Gastrocnemius medialis (tissue), 4 donors: ENCODE measurements at regions of chr15 and their contacts with region 1.

Region 1: GRCh38 chr15:47196057-47196456 is 521.2 kb upstream of the SEMA6D start:
- DNase-seq: peak; percentile 57 to 65
- ATAC-seq: peak; percentile 93 to 97
- H3K4me3 ChIP-seq: no peak overlapping the region
- H3K27ac ChIP-seq: no peak overlapping the region
- H3K4me1 ChIP-seq: no peaks in the 10 kb centered on the region
- H3K27me3 ChIP-seq: no peaks in the 10 kb centered on the region
- CTCF ChIP-seq: peak; percentile 64 to 82 (median 76)
- POLR2A ChIP-seq: no peak

Region 2: GRCh38 chr15:47293466-47294162 is 97.6 kb after region 1 on chr15:
- in situ Hi-C with region 1: loop called in 1 of 4 experiments (anchors 25 kb)
- intact Hi-C with region 1: no loop called
- DNase-seq: peak; percentile 18 to 57
- ATAC-seq: peak; percentile 69 to 74
- H3K4me3 ChIP-seq: no peak overlapping the region
- H3K27ac ChIP-seq: peak overlapping the region in 1 of 4 donors; percentile 11
- H3K4me1 ChIP-seq: peaks cover 0 to 10% of the 10 kb centered on the region in 2 donors
- H3K27me3 ChIP-seq: no peaks in the 10 kb centered on the region
- CTCF ChIP-seq: no peak
- POLR2A ChIP-seq: no peak

Region 3: GRCh38 chr15:47688573-47689086 is 492.6 kb after region 1 on chr15:
- in situ Hi-C with region 1: loop called in 1 of 4 experiments (anchors 25 kb)
- intact Hi-C with region 1: no loop called
- DNase-seq: no peak
- ATAC-seq: no peak
- H3K4me3 ChIP-seq: no peak overlapping the region
- H3K27ac ChIP-seq: no peak overlapping the region
- H3K4me1 ChIP-seq: no peaks in the 10 kb centered on the region
- H3K27me3 ChIP-seq: no peaks in the 10 kb centered on the region
- CTCF ChIP-seq: no peak
- POLR2A ChIP-seq: no peak

Region 4: GRCh38 chr15:47717036-47717611 is 521.1 kb after region 1 on chr15 and contains the start of gene SEMA6D:
- in situ Hi-C with region 1: loop called in 1 of 4 experiments (anchors 25 kb)
- intact Hi-C with region 1: loop called (anchors 5 kb)
- DNase-seq: peak; percentile 79 to 80
- ATAC-seq: peak; percentile 69 to 77
- H3K4me3 ChIP-seq: peak within 1 kb of the TSS; percentile 77 to 89 (median 85)
- H3K27ac ChIP-seq: peak within 1 kb of the TSS; percentile 88 to 96 (median 94)
- H3K4me1 ChIP-seq: peaks cover 32% of the 10 kb centered on the region in 2 donors
- H3K27me3 ChIP-seq: no peaks in the 10 kb centered on the region
- CTCF ChIP-seq: peak in 4 of 5 experiments; percentile 39 to 66 (median 52)
- POLR2A ChIP-seq: peak; percentile 12 to 29
- total RNA-seq, gene SEMA6D: 0.97 to 5.9 (median 2.7) TPM

Region 5: DNA sequence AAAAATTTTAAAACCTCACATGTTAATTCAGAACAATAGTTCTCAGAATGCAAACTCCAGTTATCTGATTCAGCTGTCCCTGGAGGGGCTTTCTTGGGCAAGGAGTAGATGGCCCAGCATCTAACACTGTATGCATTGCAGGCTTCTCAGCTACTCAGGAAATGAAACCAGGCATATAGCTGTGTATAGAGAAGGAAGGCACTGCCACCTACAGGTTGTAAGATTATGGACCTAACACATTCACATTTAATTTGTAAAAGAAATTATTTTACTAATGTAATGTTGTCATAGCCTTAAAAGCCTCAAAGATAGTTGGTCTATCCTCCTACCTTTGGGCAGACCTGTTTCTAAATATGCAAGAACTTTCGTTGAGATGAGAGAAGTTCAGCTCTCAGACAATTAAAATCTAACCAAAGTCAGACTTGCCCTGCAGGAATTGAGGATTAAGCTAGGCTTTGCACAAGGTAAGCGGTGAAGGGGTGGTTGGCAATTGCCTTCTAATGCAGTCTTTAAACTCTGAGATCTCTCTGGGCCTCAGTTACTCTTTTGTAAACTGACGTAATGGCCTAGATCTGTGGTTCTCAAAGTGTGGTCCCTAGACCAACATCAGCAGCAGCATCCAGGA is 792.0 kb after region 1 on chr15:
- in situ Hi-C with region 1: loop called (anchors 5 kb)
- intact Hi-C with region 1: loop called (anchors 1 kb)
- DNase-seq: no peak
- ATAC-seq: peak; percentile 86 to 89
- H3K4me3 ChIP-seq: no peak overlapping the region
- H3K27ac ChIP-seq: no peak overlapping the region
- H3K4me1 ChIP-seq: no peaks in the 10 kb centered on the region
- H3K27me3 ChIP-seq: no peaks in the 10 kb centered on the region
- CTCF ChIP-seq: peak; percentile 51 to 78 (median 66)
- POLR2A ChIP-seq: no peak

Region 6: DNA sequence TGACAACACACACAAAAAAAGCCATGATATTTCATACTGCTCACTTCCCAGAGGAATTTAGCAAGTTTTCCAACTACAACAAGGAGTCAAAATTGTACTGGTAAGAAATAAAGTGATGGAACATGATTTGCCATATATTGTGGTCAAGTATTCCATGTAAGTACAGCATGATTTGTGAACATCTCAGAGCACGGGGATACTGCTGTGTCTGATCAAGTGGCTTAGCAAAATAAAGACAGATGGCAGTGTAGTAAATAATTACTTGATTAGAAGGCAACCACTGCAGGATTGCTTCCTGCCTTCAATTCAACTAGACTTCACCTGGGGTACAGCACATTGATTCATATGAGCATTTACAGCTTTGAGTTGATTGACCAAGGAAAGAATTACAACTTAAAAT is 1083.6 kb after region 1 on chr15:
- in situ Hi-C with region 1: loop called (anchors 10 to 25 kb)
- intact Hi-C with region 1: no loop called
- DNase-seq: no peak
- ATAC-seq: no peak
- H3K4me3 ChIP-seq: no peak overlapping the region
- H3K27ac ChIP-seq: no peak overlapping the region
- H3K4me1 ChIP-seq: no peaks in the 10 kb centered on the region
- H3K27me3 ChIP-seq: no peaks in the 10 kb centered on the region
- CTCF ChIP-seq: no peak
- POLR2A ChIP-seq: no peak

Region 7: GRCh38 chr15:48285329-48286214 is 1089.5 kb after region 1 on chr15:
- in situ Hi-C with region 1: loop called in 3 of 4 experiments (anchors 10 to 25 kb)
- intact Hi-C with region 1: loop called (anchors 1 kb)
- DNase-seq: no peak
- ATAC-seq: peak in 1 of 2 donors; percentile 50
- H3K4me3 ChIP-seq: peak overlapping the region in 1 of 4 donors; percentile 27
- H3K27ac ChIP-seq: no peak overlapping the region
- H3K4me1 ChIP-seq: no peaks in the 10 kb centered on the region
- H3K27me3 ChIP-seq: peaks cover 0 to 5% (median 0%) of the 10 kb centered on the region in 3 donors
- CTCF ChIP-seq: peak; percentile 39 to 71 (median 58)
- POLR2A ChIP-seq: no peak